Common myeloid progenitor, CD34-positive (primary cell): ENCODE measurements at regions of chr6 and their contacts with region 1.

Region 1: GRCh38 chr6:157284738-157285421 is 38.4 kb downstream of the TMEM242 start:
- DNase-seq: no peak
- H3K4me3 ChIP-seq: no peak overlapping the region
- H3K27ac ChIP-seq: no peak overlapping the region
- H3K4me1 ChIP-seq: peaks cover 0 to 2% (median 0%) of the 10 kb centered on the region in 4 experiments
- H3K27me3 ChIP-seq: no peaks in the 10 kb centered on the region

Region 2: DNA sequence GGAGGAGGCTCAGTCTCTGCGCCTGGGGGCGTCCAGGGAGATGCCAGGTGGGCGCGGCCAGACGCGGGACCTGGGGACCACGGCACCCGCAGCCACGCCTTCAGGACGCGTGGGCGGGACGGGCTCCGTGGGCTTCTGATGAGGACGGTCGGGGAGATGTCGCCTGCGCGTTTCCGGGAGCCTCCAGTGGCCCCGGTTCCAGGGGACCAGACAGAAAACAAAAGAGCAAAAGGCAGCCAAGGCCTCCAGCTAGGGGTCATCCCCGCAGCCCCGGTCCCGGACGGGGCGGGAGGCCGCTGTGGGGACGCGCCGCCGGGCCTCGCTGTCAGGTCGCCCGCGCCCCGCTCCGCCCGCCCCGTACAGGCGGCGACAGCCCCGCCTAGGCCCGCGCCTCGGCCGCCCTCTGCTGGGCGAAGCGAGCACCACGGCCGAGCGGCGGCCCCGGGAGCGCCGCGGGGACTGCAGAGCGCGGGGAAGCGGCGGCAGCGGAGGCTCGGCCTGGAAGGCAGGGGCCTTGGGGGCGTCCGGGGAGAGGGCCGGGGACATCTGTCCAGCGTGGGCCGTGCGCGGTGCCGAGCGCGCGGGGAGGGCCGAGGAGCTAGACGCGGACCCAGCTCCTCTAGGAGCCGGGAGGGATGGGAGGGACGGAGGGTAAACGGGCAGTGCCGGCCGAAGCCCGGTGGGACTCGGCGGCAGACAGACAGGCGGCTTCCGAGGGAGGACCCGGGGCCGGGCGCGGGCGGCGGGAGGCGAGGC is 10.2 kb before region 1 on chr6:
- CTCF ChIA-PET with region 1: interaction called, 12 read pairs
- POLR2A ChIA-PET with region 1: no interaction called
- DNase-seq: peak; percentile 79 to 88 (median 83)
- H3K4me3 ChIP-seq: peak overlapping the region; percentile 65 to 84 (median 73)
- H3K27ac ChIP-seq: no peak overlapping the region
- H3K4me1 ChIP-seq: peaks cover 2 to 18% (median 14%) of the 10 kb centered on the region in 4 experiments
- H3K27me3 ChIP-seq: peaks cover 0 to 1% (median 0%) of the 10 kb centered on the region in 5 experiments